ENCODE measurements at regions of chr6 and their contacts with region 1.

Region 1: GRCh38 chr6:106141441-106142237 is 55.5 kb downstream of the PRDM1 start:
- DNase-seq: peak; percentile 38 to 56
- ATAC-seq: peak; percentile 71 to 84 (median 78)
- H3K4me3 ChIP-seq: no peak overlapping the region
- H3K4me3 Mint-ChIP-seq: peak overlapping the region; percentile 88
- H3K27ac ChIP-seq: peak overlapping the region; percentile 77
- H3K27ac Mint-ChIP-seq: peak overlapping the region; percentile 92 to 96
- H3K4me1 ChIP-seq: peaks cover 55% of the 10 kb centered on the region
- H3K4me1 Mint-ChIP-seq: peaks cover 59 to 72% of the 10 kb centered on the region in 2 donors
- H3K27me3 ChIP-seq: no peaks in the 10 kb centered on the region
- H3K27me3 Mint-ChIP-seq: no peaks in the 10 kb centered on the region
- CTCF ChIP-seq: no peak

Region 2: DNA sequence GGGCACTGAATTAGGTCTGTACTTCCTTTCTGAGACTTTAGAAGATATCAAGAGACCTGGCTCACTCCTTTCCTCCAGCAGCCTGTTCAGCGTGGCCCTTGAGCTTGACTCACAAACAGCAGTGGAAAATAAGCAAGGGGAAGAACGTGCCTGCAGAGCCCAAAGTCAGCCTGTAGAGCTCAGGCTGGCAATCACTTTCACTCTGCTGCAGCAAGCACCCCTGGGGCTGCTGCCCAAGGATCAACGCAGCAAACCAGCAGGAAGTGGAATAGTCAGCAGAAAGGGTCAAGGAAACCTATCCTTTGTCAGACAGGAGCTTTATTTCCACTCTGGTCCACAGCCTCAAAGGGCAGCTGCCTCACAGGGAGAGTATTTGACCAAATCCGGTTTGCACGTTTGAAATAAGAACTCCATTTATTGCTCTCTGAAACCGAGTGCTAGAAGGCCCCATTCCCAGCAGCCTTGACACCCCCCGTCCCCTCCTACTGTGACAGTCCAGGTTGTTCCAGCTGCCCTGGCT is 21.9 kb after region 1 on chr6:
- intact Hi-C with region 1: loop called (anchors 1 kb)
- DNase-seq: peak; percentile 48 to 72
- ATAC-seq: peak; percentile 45 to 63 (median 55)
- H3K4me3 ChIP-seq: no peak overlapping the region
- H3K4me3 Mint-ChIP-seq: peak overlapping the region; percentile 77
- H3K27ac ChIP-seq: peak overlapping the region; percentile 90
- H3K27ac Mint-ChIP-seq: peak overlapping the region; percentile 94 to 98
- H3K4me1 ChIP-seq: peaks cover 34% of the 10 kb centered on the region
- H3K4me1 Mint-ChIP-seq: peaks cover 63 to 65% of the 10 kb centered on the region in 2 donors
- H3K27me3 ChIP-seq: no peaks in the 10 kb centered on the region
- H3K27me3 Mint-ChIP-seq: no peaks in the 10 kb centered on the region
- CTCF ChIP-seq: no peak

Region 3: DNA sequence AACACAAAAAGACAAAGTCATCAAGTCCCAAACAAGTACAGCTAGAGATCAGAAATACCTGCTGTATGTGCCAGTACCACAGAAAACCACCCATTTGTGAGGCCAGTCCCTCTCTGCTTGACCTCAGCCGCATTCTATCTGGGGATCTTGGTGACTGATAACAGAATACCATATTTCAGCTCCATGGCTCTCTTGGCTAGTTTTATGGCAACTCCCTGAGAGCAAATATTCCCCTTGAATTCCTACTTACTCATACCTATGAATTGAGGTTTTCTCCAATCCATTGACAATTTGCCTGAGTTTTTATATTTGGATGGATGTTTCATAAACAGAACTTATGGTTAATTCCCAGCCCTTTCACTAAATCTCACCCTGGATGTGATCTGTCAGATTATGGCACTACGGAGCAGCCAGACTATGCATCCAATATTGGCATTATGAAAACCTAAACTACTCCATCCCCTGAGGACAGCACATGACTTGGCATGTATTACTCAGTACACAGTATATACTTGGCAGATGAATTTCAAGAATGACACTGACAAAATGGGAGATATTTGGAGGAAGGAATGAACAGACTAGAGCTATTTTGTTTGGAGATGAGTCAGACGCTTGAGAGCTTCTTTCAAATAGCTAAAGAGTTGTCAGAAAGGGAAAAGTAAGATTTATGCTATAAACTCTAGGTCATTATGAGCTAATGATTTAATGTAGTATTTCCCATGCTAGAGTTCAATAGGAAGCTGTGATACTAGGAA is 40.2 kb after region 1 on chr6:
- intact Hi-C with region 1: no loop called
- DNase-seq: no peak
- ATAC-seq: no peak
- H3K4me3 ChIP-seq: no peak overlapping the region
- H3K4me3 Mint-ChIP-seq: no peak overlapping the region
- H3K27ac ChIP-seq: no peak overlapping the region
- H3K27ac Mint-ChIP-seq: no peak overlapping the region
- H3K4me1 ChIP-seq: peaks cover 11% of the 10 kb centered on the region
- H3K4me1 Mint-ChIP-seq: peaks cover 10 to 16% of the 10 kb centered on the region in 2 donors
- H3K27me3 ChIP-seq: no peaks in the 10 kb centered on the region
- H3K27me3 Mint-ChIP-seq: no peaks in the 10 kb centered on the region
- CTCF ChIP-seq: no peak

Measured in natural killer cell (primary cell).